Activated naive CD4-positive, alpha-beta T cell treated with anti-CD3 and anti-CD28 coated beads for 36 hours (primary cell): ENCODE measurements at regions of chr6 and their contacts with region 1.

Region 1: GRCh38 chr6:34154668-34155447 is 9.0 kb upstream of the GRM4 start:
- DNase-seq: peak; percentile 67
- H3K4me3 Mint-ChIP-seq: no peak overlapping the region
- H3K27ac Mint-ChIP-seq: no peak overlapping the region
- H3K4me1 Mint-ChIP-seq: peaks cover 8% of the 10 kb centered on the region
- H3K27me3 Mint-ChIP-seq: peaks cover 35% of the 10 kb centered on the region

Region 2: DNA sequence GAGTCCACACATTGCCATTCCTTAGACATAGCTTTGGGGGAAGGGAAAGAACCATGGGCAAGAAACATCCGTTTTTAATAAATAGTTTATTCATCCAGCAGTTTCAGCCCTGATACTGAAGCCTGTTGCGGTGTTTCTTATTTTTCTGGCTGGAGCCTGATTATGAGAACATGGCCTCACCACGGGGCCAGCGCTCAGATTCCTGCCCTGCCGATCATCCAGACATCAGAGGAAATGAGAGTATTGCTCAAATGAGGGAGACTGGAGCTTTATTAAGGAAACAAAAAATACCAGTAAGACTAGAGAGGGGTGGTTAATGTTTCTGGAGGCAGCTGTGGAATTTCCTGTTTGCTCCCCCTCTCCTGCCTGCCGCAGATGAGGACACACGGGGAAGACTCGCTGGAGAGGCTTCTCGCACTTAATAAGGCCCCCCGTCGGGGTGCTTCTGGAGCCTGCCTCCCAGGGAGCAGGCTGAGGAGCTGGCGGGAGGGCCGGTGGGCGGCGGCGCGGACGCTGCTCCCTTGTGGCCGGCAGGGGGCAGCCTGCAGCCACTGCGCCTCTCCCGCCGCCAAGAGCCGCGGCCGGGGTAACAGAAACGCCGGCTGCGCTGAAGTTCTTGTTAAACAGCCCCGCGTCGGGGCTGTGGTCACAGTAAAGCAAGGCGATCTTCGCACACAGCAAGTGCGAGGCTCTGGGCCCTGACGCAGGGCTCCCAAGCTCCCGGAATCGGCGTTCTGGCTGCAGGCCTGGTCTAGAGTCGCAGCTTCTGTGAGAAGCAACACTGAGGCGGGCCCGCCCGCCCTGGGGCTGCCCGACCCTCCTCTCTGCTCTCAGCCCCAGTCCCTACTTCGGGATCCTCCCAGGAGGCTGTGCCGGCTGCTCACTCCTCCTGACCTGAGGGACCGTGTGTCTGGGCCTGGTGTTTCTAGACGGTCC is 383.4 kb before region 1 on chr6:
- CTCF ChIA-PET with region 1: interaction called, 5 read pairs
- intact Hi-C with region 1: loop called (anchors 2 kb)
- DNase-seq: peak; percentile 63
- H3K4me3 Mint-ChIP-seq: no peak overlapping the region
- H3K27ac Mint-ChIP-seq: no peak overlapping the region
- H3K4me1 Mint-ChIP-seq: peaks cover 3% of the 10 kb centered on the region
- H3K27me3 Mint-ChIP-seq: no peaks in the 10 kb centered on the region

Region 3: DNA sequence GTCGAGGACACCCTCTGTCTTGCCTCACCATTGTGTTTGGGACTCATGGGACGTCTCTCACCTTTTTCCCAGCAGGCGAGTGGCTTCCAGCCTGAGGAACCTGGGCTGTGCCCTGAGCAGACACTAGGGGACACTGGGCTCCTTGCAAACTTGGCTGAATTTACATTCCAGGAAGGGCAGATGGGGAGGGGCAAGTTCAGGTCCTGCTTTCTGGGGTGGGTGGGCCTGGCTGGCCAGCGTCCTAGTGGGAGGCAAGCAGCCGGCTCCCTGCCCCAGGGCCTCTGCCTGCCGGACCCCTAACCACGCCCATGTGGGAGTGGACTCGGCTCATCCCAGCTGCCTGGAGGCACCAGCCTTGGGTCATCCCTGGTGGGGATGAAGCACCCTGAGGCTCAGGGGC is 302.9 kb before region 1 on chr6:
- CTCF ChIA-PET with region 1: no interaction called
- intact Hi-C with region 1: loop called (anchors 10 kb)
- DNase-seq: peak; percentile 33
- H3K4me3 Mint-ChIP-seq: no peak overlapping the region
- H3K27ac Mint-ChIP-seq: no peak overlapping the region
- H3K4me1 Mint-ChIP-seq: peaks cover 17% of the 10 kb centered on the region
- H3K27me3 Mint-ChIP-seq: no peaks in the 10 kb centered on the region

Region 4: DNA sequence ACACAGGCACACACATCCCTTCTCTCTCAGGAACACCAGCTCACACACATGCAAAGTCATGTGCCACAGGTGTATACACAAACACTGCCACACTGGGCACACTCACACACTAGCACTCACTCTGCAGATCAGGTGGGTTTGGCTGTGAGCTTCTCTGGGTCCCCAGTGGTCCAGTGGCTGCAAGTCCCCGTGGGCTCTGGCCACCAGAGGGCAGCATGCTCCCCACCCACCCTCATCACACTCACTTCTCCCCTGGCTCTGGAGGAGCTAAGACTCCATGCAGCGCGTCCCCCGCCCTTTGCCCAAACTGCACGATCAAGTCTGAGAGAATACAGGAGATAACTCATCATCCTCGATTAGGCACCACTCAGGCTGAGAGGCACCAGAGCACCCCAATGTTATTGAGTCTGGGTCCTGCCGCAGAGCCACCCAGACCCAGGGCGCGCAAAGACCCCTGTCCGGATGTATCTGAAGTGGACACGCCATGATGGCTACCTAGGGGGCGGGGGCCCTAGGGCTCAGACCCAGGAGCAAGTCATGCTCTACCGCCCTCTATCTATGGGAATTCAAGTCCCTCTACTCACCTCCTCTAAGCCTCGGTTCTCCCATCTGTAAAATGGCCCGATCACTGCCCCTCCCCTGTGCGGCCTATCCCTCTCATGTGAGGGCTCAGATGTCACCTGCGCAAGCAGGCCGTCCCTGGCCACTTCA is 99.5 kb before region 1 on chr6:
- CTCF ChIA-PET with region 1: interaction called, 58 read pairs
- intact Hi-C with region 1: loop called (anchors 1 kb)
- DNase-seq: peak; percentile 75
- H3K4me3 Mint-ChIP-seq: no peak overlapping the region
- H3K27ac Mint-ChIP-seq: no peak overlapping the region
- H3K4me1 Mint-ChIP-seq: no peaks in the 10 kb centered on the region
- H3K27me3 Mint-ChIP-seq: peaks cover 2% of the 10 kb centered on the region

Region 5: DNA sequence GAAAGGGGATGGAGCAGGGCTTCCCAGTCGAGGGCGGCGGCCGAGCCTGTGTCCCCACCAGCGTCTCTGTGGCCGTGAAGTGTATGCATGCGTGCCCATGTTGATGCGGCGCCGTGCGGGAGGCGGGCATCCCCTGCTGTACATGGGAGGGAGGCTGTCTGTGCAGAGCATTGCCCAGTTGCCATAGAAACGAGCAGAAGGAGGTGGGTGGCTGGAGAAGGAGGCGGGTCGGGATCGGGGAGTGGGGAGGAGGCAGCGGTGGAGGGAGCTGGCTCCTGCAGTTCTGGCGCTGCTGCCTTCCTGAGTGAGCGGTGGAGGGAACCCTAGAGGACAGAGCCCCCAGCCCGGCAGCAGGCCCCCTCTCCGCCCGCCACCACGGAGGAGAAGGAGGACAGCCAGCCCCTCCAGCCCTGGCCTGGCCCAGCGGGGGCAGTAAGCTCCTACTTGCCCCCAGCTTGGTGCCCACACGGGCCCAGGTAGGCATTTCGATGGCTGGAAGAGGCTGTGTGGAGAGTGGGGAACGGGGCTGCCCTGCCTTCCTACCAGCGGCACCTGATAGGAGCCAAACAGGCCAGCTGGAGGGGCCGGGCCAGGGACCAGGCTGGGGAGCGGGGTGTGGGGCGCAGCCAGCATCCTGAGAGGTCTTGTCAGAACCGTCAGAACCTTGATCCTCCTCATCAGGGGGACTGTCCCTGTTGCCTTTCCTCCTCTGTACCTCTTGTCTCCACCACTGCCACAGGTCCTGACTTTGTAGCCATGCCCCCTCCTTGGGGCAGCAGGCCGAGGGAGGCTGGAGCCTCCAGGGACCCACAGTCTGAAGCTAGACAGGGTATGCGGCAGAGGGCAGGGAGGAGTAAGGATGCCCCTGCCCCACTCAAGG is 360.0 kb after region 1 on chr6:
- CTCF ChIA-PET with region 1: no interaction called
- intact Hi-C with region 1: no loop called
- DNase-seq: no peak
- H3K4me3 Mint-ChIP-seq: no peak overlapping the region
- H3K27ac Mint-ChIP-seq: no peak overlapping the region
- H3K4me1 Mint-ChIP-seq: no peaks in the 10 kb centered on the region
- H3K27me3 Mint-ChIP-seq: no peaks in the 10 kb centered on the region